T-cell (primary cell): ENCODE measurements at regions of chr10 and their contacts with region 1.

Region 1: GRCh38 chr10:59793919-59794318 is 40.7 kb upstream of the MRLN start:
- DNase-seq: no peak
- ATAC-seq: no peak
- H3K4me3 ChIP-seq: no peak overlapping the region
- H3K4me3 Mint-ChIP-seq: no peak overlapping the region
- H3K27ac ChIP-seq: no peak overlapping the region
- H3K27ac Mint-ChIP-seq: no peak overlapping the region
- H3K4me1 ChIP-seq: no peaks in the 10 kb centered on the region
- H3K4me1 Mint-ChIP-seq: peaks cover 0 to 6% (median 0%) of the 10 kb centered on the region in 3 donors
- H3K27me3 ChIP-seq: no peaks in the 10 kb centered on the region
- H3K27me3 Mint-ChIP-seq: no peaks in the 10 kb centered on the region

Region 2: DNA sequence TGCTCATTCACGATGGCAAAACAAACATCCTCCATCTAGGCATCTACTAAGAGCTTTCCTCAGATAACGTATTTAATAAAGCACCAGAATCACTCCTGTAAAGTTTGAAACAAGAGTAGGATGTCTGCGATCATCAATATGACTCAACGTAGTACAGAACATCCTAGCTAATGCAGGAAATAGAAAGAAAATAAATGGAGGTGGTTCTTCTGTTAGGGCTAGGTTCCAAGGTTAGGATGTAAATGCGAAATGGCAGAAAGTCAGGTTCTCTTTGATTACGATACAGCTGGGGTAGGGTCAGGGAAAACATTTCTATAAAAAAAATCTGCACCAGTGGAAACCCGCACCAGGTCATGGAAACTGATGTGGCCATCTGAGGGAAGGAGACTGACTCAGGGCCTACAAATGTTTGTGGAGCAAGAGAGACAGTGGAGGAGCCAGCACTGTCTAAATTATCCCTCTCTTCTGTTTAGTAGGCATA is 83.3 kb after region 1 on chr10:
- CTCF ChIA-PET with region 1: no interaction called
- POLR2A ChIA-PET with region 1: interaction called in 1 of 2 experiments, 11 read pairs
- DNase-seq: no peak
- ATAC-seq: no peak
- H3K4me3 ChIP-seq: no peak overlapping the region
- H3K4me3 Mint-ChIP-seq: no peak overlapping the region
- H3K27ac ChIP-seq: no peak overlapping the region
- H3K27ac Mint-ChIP-seq: peak overlapping the region in 1 of 2 donors; percentile 1
- H3K4me1 ChIP-seq: peaks cover 4 to 26% of the 10 kb centered on the region in 2 experiments
- H3K4me1 Mint-ChIP-seq: peaks cover 75 to 88% (median 88%) of the 10 kb centered on the region in 3 donors
- H3K27me3 ChIP-seq: no peaks in the 10 kb centered on the region
- H3K27me3 Mint-ChIP-seq: no peaks in the 10 kb centered on the region

Region 3: GRCh38 chr10:60032723-60033122 is 238.8 kb after region 1 on chr10:
- CTCF ChIA-PET with region 1: no interaction called
- POLR2A ChIA-PET with region 1: no interaction called
- DNase-seq: peak in 22 of 35 experiments; percentile 0 to 51 (median 19)
- ATAC-seq: no peak
- H3K4me3 ChIP-seq: no peak overlapping the region
- H3K4me3 Mint-ChIP-seq: no peak overlapping the region
- H3K27ac ChIP-seq: no peak overlapping the region
- H3K27ac Mint-ChIP-seq: no peak overlapping the region
- H3K4me1 ChIP-seq: no peaks in the 10 kb centered on the region
- H3K4me1 Mint-ChIP-seq: no peaks in the 10 kb centered on the region
- H3K27me3 ChIP-seq: no peaks in the 10 kb centered on the region
- H3K27me3 Mint-ChIP-seq: no peaks in the 10 kb centered on the region